Posterior vena cava (tissue), 2 donors: ENCODE measurements at regions of chr3 and their contacts with region 1.

Region 1: GRCh38 chr3:52770496-52771333 is at the start of gene NEK4:
- DNase-seq: peak; percentile 98
- total RNA-seq, gene NEK4: 17.3 to 21.5 TPM

Region 2: DNA sequence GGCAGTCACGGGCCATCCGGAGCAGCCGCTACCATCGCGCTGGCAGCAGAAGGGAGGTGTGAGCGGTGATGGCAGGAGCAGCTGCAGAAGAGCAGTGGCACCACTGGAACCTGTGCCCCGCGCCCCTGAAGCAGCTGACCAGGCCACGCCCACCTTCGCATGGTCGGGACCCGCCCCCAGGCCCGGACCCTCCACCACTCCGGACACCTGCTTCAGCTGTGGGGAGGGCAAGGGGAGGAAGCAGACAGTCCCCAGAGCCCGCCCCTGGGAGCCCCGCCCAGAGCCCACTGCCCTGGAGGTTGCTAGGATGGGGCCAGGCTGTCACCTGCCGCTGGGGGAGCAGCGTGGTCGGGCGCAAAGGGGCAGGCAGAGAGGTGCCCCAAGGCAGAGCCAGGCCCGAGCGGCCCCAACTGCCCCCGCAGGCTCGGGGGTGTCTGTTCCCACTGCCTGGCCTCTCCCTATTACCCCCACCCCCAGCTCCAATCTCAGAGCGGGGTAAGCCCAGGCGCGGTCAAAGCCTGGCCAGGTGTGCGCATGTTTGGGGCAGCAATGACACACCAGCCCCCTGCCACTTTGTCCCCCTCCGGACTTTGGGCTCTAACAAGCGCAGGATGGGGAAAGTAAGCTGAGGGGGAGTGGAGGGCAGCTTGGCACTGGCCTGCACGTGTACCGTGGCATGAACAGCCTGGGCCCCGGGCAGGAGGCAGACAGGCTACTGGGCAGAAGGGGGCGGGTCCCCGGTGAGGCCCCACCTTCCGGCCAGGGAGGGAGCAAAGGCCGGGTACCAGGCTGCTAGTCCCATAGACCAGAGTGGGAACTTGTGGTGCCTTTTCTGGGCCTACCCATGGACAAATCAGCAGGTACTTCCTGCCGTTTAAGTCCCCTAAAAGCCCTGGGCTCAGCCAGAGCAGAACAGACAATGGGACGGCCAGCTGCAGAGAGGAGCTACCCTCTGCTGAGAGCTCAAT is 56.1 kb before region 1 on chr3:
- intact Hi-C with region 1: no loop called
- DNase-seq: peak; percentile 76

Region 3: DNA sequence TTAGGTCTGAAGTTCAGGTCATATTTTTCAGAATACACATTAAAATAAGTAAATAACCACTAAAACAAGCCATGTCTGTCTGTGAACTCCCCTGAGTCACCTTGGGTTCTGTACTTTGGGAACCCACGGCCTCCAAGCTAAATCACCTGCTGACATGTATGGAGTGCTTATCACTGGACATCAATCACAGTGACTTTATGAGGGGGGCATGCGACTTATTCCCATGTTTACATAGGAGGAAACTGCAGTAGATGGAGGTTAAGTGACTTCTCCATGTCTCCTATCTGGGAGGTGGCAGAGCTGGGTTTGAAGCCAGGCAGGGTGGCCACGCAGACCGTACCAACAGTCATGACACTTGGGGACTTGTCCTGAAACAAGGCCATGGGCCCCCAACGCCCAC is 51.6 kb after region 1 on chr3:
- intact Hi-C with region 1: loop called in 1 of 2 experiments (anchors 2 kb)
- DNase-seq: no peak